ENCODE measurements at regions of chr1 and their contacts with region 1.

Region 1: GRCh38 chr1:39081266-39082009 is 55.3 kb downstream of the NDUFS5 start:
- DNase-seq: peak in 3 of 10 donors; percentile 39 to 60 (median 54)
- H3K4me3 ChIP-seq: peak overlapping the region; percentile 43 to 82 (median 67)
- H3K27ac ChIP-seq: peak overlapping the region in 55 of 59 donors; percentile 13 to 94 (median 84)
- H3K27me3 ChIP-seq: no peaks in the 10 kb centered on the region
- CTCF ChIP-seq: peak in 3 of 56 donors; percentile 6 to 9 (median 8)

Region 2: GRCh38 chr1:38973659-38974424 is 107.6 kb before region 1 on chr1:
- intact Hi-C with region 1: no loop called
- DNase-seq: no peak
- H3K4me3 ChIP-seq: no peak overlapping the region
- H3K27ac ChIP-seq: no peak overlapping the region
- H3K27me3 ChIP-seq: no peaks in the 10 kb centered on the region
- CTCF ChIP-seq: no peak

Region 3: GRCh38 chr1:39026051-39026865 is 55.2 kb before region 1 on chr1 and contains the start of gene NDUFS5:
- intact Hi-C with region 1: loop called in 1 of 2 experiments (anchors 5 kb)
- DNase-seq: peak; percentile 72 to 95 (median 91)
- H3K4me3 ChIP-seq: peak within 1 kb of the TSS; percentile 47 to 97 (median 82)
- H3K27ac ChIP-seq: peak within 1 kb of the TSS; percentile 69 to 98 (median 92)
- H3K27me3 ChIP-seq: no peaks in the 10 kb centered on the region
- CTCF ChIP-seq: peak in 12 of 56 donors; percentile 2 to 23 (median 10)
- total RNA-seq, gene NDUFS5: 129 to 361 (median 263) TPM